A549 (cell line): ENCODE measurements at regions of chr16 and their contacts with region 1.

Region 1: GRCh38 chr16:28846080-28846932 is at the start of gene TUFM:
- DNase-seq: peak; percentile 97 to 99
- ATAC-seq: peak; percentile 88 to 96
- H3K4me3 ChIP-seq: peak within 1 kb of the TSS; percentile 74
- H3K27ac ChIP-seq: peak within 1 kb of the TSS; percentile 89 to 95
- H3K4me1 ChIP-seq: peaks cover 13% of the 10 kb centered on the region
- CTCF ChIP-seq: peak; percentile 34
- EP300 ChIP-seq: no peak
- POLR2A ChIP-seq: peak; percentile 76
- RAD21 ChIP-seq: peak; percentile 24 to 33; a peak in 3 of 5 replicates
- polyA plus RNA-seq, gene TUFM: 139 and 159 TPM in 2 replicates

Region 2: GRCh38 chr16:28823872-28824716 is 22.2 kb before region 1 on chr16:
- CTCF ChIA-PET with region 1: interaction called, 5 read pairs
- POLR2A ChIA-PET with region 1: interaction called, 38 read pairs
- DNase-seq: peak; percentile 96 to 99
- ATAC-seq: peak; percentile 82 to 93
- H3K4me3 ChIP-seq: peak overlapping the region; percentile 100
- H3K27ac ChIP-seq: peak overlapping the region; percentile 95 to 100
- H3K4me1 ChIP-seq: peaks cover 37% of the 10 kb centered on the region
- CTCF ChIP-seq: no peak
- EP300 ChIP-seq: no peak
- POLR2A ChIP-seq: peak; percentile 32
- RAD21 ChIP-seq: no peak

Region 3: DNA sequence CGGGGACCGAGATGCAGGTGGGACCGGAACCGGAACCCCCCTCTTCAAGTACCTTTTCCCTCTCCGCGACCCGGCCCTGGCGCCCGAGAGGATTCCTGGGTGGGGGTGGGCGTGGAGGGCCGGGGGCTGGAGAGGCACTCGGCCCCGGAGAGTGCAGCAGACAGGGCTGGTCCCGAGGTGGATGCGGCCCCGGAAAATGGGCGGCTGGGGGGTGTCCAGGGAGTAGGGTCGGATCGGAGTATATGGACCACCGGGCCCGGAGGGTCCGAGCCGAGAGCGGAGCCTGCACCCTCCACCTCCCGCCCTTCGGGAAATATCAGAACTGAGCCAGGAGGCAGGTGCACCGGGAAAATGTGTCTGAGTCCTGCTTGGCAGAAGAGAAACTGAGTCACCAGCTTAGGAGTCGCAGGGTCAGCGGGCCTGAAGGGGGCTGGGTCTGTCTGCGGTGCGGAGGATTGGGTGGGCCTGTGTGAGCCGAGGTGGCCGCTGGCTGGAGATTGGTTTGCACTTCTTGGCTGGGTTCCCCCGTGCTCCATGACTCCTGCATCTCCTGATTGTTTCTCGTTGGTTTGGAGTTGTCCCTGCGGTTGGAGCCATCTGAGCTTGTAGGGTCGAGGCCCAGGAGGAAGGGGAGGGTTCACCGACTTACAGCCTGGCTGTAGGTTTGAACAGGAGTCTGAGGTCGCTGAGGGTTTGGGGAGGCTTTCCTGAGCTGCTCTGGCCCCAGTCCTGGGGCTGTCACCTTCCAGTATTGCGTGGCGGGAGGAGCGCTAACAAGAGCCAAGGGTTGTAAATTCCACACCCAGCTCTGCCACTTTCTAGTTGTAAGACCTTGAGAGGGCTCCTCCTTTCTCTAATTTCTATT is 17.9 kb after region 1 on chr16:
- CTCF ChIA-PET with region 1: interaction called, 49 read pairs
- POLR2A ChIA-PET with region 1: interaction called, 57 read pairs
- DNase-seq: no peak
- ATAC-seq: peak; percentile 13 to 14; a peak in 3 of 6 replicates
- H3K4me3 ChIP-seq: peak overlapping the region; percentile 99
- H3K27ac ChIP-seq: peak overlapping the region; percentile 93 to 98
- H3K4me1 ChIP-seq: peaks cover 10% of the 10 kb centered on the region; the same call in 2 of the 3 replicates
- CTCF ChIP-seq: no peak
- EP300 ChIP-seq: no peak
- POLR2A ChIP-seq: no peak
- RAD21 ChIP-seq: no peak

Region 4: DNA sequence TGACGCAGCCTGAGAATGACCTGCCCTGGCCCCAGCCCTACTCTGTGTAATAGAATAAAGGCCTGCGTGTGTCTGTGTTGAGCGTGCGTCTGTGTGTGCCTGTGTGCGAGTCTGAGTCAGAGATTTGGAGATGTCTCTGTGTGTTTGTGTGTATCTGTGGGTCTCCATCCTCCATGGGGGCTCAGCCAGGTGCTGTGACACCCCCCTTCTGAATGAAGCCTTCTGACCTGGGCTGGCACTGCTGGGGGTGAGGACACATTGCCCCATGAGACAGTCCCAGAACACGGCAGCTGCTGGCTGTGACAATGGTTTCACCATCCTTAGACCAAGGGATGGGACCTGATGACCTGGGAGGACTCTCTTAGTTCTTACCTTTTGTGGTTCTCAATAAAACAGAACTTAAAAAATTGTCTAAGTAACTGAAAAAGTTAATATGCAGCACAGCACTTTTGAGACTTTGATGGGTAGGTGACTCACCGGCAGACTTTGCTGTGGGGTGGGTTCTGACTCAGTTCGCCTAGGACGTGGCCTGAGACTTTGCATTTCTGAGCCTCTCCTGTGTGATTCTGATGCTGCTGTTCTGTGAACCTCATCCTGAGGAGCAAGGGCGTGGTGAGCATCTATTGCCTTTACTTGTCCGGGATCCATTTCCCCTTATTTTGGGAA is 144.2 kb after region 1 on chr16:
- CTCF ChIA-PET with region 1: no interaction called
- POLR2A ChIA-PET with region 1: no interaction called
- DNase-seq: no peak
- ATAC-seq: peak in 1 of 2 experiments; percentile 19; a peak in 1 of 6 replicates
- H3K4me3 ChIP-seq: no peak overlapping the region
- H3K27ac ChIP-seq: no peak overlapping the region
- H3K4me1 ChIP-seq: no peaks in the 10 kb centered on the region
- CTCF ChIP-seq: no peak
- EP300 ChIP-seq: no peak
- POLR2A ChIP-seq: no peak
- RAD21 ChIP-seq: no peak